KBM-7 (cell line): ENCODE measurements at regions of chr3 and their contacts with region 1.

Region 1: DNA sequence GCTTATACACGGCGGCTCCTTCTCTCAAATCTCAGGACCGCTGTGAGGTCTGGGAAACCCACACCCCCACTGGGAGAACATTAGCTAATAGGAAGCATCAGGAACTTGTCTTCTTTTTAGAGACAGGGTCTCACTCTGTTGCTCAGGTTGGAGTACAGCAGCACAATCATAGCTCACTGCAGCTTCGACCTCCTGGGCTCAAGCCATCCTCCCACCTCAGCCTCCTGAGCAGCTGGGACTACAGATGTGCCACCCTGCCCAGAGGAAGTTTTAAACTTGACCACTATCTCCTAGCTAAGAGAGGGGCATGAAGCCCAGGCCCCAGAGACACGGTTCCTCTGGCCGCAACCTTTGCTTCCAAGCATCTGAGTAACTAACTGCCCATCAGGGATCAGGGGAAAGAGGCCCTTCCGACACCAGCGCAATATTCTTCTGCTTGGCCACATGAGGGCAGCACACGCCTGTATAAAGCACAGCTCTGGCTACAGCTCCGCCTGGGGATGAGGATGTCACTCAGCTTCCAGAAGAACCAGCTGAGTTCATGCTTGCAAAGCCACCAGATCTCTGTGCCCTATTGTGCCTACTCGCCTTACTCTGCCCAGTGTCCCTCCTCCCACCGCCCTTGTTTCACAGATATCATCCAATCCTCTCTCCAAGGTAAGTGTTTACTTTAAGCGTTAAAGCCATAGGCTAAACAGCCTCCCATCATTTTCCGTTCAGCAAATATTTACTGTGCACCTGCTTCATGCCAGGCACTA is 57.5 kb upstream of the SLC6A11 start:
- DNase-seq: peak; percentile 63

Region 2: DNA sequence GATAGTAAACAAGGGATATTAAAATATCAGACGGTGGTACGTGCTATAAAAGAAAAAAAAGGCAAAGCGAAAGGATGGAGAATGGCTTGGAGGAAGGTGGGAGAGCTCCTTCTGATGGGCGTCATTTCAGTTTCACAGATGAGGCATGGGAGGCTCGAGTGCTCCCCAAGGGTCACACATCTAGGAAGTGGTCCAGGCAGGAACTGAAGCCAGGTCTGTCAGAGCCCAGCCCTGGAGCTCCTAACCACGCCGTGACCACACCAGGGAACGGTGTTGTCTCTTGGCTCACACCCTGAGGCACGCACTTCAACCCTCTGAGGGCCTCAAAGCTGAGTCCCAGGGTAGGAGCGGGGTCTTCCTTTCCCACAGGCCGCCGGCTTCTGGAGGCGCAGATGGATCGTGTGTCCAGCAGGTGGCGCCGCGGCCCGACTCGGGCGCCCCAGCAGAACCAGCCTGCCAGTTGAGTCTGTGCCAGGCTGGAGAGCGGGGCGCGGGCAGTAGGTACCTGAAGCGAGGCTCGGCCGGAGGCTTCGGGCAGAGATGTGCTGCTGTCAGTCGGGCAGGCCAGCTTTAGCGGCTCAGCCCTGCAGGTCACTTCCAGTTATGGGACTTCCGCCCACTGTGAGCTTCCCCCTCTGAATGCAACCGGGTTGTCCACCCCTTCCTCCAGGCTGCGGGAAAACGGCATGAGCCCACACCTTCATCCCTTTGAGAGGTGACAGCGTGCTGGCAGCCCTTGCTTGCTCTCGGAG is 302.2 kb after region 1 on chr3:
- in situ Hi-C with region 1: loop called (anchors 25 kb)
- DNase-seq: peak; percentile 70